ENCODE measurements at regions of chr4 and their contacts with region 1.

Region 1: GRCh38 chr4:182925298-182925738 is 8.1 kb upstream of the DCTD start:
- DNase-seq: peak; percentile 83 to 87 (median 85)
- H3K4me3 ChIP-seq: no peak overlapping the region
- H3K27ac ChIP-seq: no peak overlapping the region
- H3K4me1 ChIP-seq: peaks cover 0 to 2% (median 0%) of the 10 kb centered on the region in 4 experiments
- H3K27me3 ChIP-seq: no peaks in the 10 kb centered on the region

Region 2: DNA sequence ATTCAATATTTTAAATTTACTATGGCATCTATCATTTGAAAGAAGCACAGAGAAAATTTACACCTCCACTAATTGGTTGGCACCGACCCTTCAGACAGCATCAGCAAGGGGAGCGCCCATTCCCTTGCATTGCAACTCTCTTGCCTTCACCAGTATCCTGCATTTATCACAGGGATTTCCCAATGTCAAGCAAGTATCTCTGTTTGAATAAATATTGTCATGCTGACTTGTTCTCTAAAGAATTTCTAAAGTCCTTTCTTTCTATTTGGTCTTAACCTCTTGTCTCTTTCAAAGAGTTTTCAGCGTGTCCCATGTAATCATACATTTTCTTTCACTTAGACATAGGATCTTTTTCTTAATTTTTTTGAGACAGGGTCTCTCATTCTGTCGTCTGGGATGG is 18.5 kb before region 1 on chr4:
- CTCF ChIA-PET with region 1: interaction called, 10 read pairs
- POLR2A ChIA-PET with region 1: no interaction called
- DNase-seq: no peak
- H3K4me3 ChIP-seq: no peak overlapping the region
- H3K27ac ChIP-seq: no peak overlapping the region
- H3K4me1 ChIP-seq: no peaks in the 10 kb centered on the region
- H3K27me3 ChIP-seq: no peaks in the 10 kb centered on the region

Region 3: DNA sequence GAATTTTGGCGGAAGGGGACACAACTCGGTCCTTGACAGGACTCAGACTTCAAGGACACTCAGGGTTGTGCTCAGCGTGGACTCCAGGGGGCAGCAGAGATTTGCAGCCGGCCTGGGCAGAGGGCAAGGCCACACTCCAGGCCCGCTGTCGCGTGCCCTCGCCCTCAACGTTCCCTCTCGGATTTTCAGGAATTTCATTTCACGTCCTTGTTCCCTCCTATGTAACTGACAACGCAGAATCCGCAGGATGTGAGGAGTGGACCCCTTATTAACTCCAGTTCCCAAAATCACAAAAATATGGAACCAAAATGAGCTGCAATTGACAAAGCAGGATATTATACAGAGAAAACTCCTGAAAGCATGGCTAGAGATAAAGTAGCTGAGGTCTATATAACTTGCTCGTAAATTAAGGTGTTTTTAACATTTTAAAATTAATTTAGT is 12.9 kb after region 1 on chr4:
- CTCF ChIA-PET with region 1: interaction called, 27 read pairs
- POLR2A ChIA-PET with region 1: no interaction called
- DNase-seq: peak; percentile 65 to 75 (median 71)
- H3K4me3 ChIP-seq: no peak overlapping the region
- H3K27ac ChIP-seq: no peak overlapping the region
- H3K4me1 ChIP-seq: peaks cover 0 to 1% (median 0%) of the 10 kb centered on the region in 4 experiments
- H3K27me3 ChIP-seq: peaks cover 0 to 2% (median 0%) of the 10 kb centered on the region in 5 experiments

Region 4: GRCh38 chr4:183249857-183250256 is 324.5 kb after region 1 on chr4:
- CTCF ChIA-PET with region 1: interaction called, 12 read pairs
- POLR2A ChIA-PET with region 1: no interaction called
- DNase-seq: peak; percentile 43 to 74 (median 69)
- H3K4me3 ChIP-seq: no peak overlapping the region
- H3K27ac ChIP-seq: no peak overlapping the region
- H3K4me1 ChIP-seq: no peaks in the 10 kb centered on the region
- H3K27me3 ChIP-seq: no peaks in the 10 kb centered on the region